ENCODE measurements at regions of chr13 and their contacts with region 1.

Region 1: DNA sequence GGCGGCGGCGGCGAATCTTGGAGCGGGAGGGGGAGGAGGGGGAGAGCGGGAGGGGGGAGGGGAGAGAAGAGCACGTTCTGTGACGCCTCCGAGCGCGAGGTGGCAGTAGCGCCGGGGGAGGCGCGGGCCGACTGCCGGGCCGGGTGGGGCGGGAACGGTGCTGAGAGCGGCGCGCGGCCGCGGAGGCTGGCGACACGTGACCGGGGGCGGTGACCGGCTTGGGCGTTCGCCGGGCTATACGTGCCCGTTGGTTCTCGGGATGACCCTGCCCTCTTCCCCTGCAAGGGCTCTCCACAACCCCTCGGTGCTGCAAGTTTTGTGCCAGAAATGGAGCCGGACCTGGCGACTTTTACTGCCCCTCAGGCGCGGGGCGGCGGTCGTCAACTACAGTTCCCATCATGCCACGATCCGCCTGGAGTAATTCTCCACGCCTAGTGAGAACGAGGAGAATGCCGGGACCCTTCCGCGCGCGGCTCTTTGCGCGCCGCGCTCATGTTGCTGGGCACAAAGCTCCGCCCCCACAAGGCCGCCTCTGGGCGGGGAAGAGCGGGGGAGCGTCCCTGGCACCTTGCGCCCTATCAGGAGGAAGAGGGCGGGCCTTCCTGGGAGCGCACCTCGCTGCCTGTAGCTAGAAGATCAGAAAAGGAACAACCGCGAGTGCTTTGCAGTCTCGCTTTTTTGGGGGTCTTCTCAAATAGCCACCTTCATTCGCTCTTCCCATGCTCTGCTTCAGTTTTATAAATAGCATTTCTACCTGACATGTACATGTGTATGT is at the start of gene KPNA3:
- DNase-seq: peak; percentile 98
- ATAC-seq: peak; percentile 93
- H3K4me3 Mint-ChIP-seq: peak within 1 kb of the TSS; percentile 89
- H3K27ac Mint-ChIP-seq: peak within 1 kb of the TSS; percentile 88
- H3K4me1 Mint-ChIP-seq: peaks cover 30% of the 10 kb centered on the region
- H3K27me3 Mint-ChIP-seq: peaks cover 4% of the 10 kb centered on the region
- total RNA-seq, gene KPNA3: 51.7 to 58.0 TPM

Region 2: GRCh38 chr13:49495783-49496762 is 296.7 kb before region 1 on chr13 and contains the start of gene PHF11:
- CTCF ChIA-PET with region 1: no interaction called
- POLR2A ChIA-PET with region 1: interaction called, 3 read pairs
- intact Hi-C with region 1: loop called (anchors 1 to 2 kb)
- DNase-seq: peak; percentile 95
- ATAC-seq: peak; percentile 81
- H3K4me3 Mint-ChIP-seq: peak within 1 kb of the TSS; percentile 91
- H3K27ac Mint-ChIP-seq: peak within 1 kb of the TSS; percentile 99
- H3K4me1 Mint-ChIP-seq: peaks cover 49% of the 10 kb centered on the region
- H3K27me3 Mint-ChIP-seq: no peaks in the 10 kb centered on the region
- total RNA-seq, gene PHF11: 84.0 to 106 TPM

Region 3: DNA sequence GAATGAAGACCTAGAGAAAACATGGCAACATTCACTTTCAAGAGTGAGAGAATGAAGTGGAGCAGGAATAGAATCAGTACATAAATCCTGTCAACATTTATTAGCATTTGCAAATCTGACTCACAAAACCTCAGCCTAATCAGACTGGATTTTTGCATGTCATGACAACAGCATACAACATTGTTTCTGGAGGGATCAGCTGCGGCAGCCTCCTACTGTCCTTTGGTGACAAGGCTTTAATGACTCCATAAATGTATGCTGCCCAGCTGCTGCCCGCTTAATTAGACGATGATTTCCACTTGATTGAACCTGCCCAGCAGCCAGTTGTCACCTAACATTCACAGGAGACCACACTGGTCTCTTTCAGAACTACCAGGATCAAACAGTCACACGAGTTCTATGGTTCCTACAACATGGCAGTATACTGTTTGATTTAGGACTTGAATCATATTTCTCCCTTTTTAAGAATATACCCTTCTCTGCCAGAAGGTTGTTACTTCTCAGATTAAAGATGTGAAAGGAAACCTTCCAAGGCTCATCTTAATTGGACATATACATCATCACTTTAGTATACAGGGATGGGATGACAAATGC is 110.8 kb before region 1 on chr13:
- CTCF ChIA-PET with region 1: interaction called, 3 read pairs
- POLR2A ChIA-PET with region 1: interaction called, 4 read pairs
- intact Hi-C with region 1: loop called in 1 of 2 experiments (anchors 2 kb)
- DNase-seq: no peak
- ATAC-seq: no peak
- H3K4me3 Mint-ChIP-seq: no peak overlapping the region
- H3K27ac Mint-ChIP-seq: no peak overlapping the region
- H3K4me1 Mint-ChIP-seq: peaks cover 17% of the 10 kb centered on the region
- H3K27me3 Mint-ChIP-seq: no peaks in the 10 kb centered on the region

Region 4: DNA sequence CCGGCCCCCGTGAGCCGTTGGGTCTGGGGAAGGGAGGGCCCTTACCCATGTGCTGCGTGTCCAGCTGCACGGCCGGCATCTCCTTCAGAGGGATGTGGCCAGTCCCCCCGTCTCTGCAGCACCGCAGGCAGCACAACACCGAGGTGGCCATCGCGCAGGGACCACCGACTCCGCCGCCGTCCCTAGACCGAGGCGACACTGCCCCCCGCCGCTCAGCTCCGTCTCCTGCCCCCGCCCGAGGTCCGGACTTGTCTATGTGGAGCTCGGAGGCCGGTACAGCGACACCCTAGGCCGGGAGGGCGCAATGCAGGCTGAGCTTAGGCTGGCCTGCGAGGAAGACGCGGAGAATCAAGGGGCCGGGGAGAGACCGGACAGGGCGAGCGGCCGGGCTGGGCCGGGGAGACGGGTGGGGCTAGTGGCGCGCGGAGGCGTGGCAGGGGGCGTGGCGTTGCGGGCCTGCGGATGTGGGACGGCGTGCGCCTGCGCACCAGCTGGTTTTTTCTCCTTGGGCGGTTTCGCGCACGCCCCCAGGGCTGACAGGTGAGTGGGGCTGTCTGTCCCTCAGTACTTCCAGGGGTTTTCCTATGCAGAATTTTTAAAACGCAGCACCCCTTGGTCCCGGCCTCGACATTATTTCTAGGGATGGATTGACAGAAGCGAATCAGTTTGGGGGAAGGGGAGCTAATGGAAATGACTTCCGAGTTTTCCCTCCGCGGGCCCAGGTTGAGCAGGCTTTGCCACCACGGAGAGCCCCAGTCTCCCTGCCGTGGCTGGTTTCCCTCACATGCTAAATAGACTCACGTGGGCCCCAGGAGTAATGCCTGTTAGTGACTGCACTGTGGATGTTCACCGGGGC is 143.6 kb after region 1 on chr13 and contains the start of gene SPRYD7:
- CTCF ChIA-PET with region 1: interaction called, 6 read pairs
- POLR2A ChIA-PET with region 1: interaction called, 4 read pairs
- intact Hi-C with region 1: loop called (anchors 1 kb)
- DNase-seq: peak; percentile 98
- ATAC-seq: peak; percentile 98
- H3K4me3 Mint-ChIP-seq: peak within 1 kb of the TSS; percentile 84
- H3K27ac Mint-ChIP-seq: peak within 1 kb of the TSS; percentile 73
- H3K4me1 Mint-ChIP-seq: peaks cover 11% of the 10 kb centered on the region
- H3K27me3 Mint-ChIP-seq: no peaks in the 10 kb centered on the region
- total RNA-seq, gene SPRYD7: 4.8 to 4.9 TPM

Region 5: GRCh38 chr13:51583875-51584730 is 1791.4 kb after region 1 on chr13 and contains the start of gene WDFY2:
- CTCF ChIA-PET with region 1: no interaction called
- POLR2A ChIA-PET with region 1: no interaction called
- intact Hi-C with region 1: loop called in 1 of 2 experiments (anchors 2 kb)
- DNase-seq: peak; percentile 100
- ATAC-seq: peak; percentile 88
- H3K4me3 Mint-ChIP-seq: peak within 1 kb of the TSS; percentile 89
- H3K27ac Mint-ChIP-seq: peak within 1 kb of the TSS; percentile 95
- H3K4me1 Mint-ChIP-seq: peaks cover 37% of the 10 kb centered on the region
- H3K27me3 Mint-ChIP-seq: no peaks in the 10 kb centered on the region
- total RNA-seq, gene WDFY2: 7.4 to 9.5 TPM

Measured in activated CD4-positive, alpha-beta T cell treated with anti-CD3 and anti-CD28 coated beads for 36 hours (primary cell).